GM12878 (cell line): ENCODE measurements at regions of chr22 and their contacts with region 1.

Region 1: DNA sequence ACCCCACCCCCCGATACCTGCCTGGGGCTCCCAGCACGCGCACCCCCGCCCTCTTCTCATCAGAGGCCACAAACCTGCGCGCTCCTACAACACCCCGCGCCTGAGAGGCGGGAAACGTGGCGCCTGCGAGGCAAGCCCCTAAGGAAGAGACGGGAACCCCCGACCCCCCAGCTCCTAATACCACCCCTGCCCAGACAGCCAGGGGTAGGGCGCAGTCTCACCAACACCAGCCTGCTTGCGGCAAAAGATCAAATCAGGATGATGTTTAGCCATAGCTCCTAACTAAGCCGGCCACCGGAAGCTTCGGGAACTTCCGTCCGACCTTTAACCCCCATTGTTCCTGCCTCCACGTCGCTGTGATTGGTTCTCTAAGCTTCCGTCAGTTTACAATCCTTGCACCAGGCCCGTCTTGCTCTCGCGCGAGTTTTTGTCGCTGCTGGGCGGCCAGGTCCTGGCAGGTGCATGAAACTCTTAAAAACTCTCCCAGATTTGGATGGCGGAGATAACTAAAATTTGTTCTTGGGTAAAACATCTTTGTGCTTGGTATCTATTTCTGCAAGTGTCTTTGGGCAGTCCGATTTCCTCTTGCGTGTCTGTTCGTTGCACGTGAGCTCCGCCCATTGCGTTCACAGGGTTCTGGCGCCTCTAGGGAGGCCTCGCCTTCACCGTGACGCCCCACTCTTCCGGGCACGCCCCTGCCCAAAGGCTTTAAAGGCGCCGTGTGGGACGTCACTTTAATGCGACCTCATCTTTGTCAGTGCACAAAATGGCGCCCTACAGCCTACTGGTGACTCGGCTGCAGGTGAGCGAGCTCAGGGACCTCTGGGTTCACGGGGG is at the starts of genes ACO2 and PHF5A:
- DNase-seq: peak; percentile 98
- ATAC-seq: peak; percentile 95
- H3K4me3 ChIP-seq: peak within 1 kb of the TSS; percentile 80
- H3K27ac ChIP-seq: peak within 1 kb of the TSS; percentile 97
- H3K4me1 ChIP-seq: peaks cover 14% of the 10 kb centered on the region
- H3K27me3 ChIP-seq: no peaks in the 10 kb centered on the region
- CTCF ChIP-seq: no peak
- EP300 ChIP-seq: peak in 1 of 2 experiments; percentile 32; a peak in 1 of 4 replicates
- POLR2A ChIP-seq: peak; percentile 81
- RAD21 ChIP-seq: no peak
- polyA plus RNA-seq, gene ACO2: 21.4 to 22.3 TPM
- polyA plus RNA-seq, gene PHF5A: 40.5 to 77.0 TPM

Region 2: GRCh38 chr22:41425660-41426365 is 42.8 kb before region 1 on chr22:
- CTCF ChIA-PET with region 1: no interaction called
- POLR2A ChIA-PET with region 1: no interaction called
- RAD21 ChIA-PET with region 1: no interaction called
- SMC1A ChIA-PET with region 1: no interaction called
- in situ Hi-C with region 1: no loop called
- intact Hi-C with region 1: no loop called
- DNase-seq: no peak
- ATAC-seq: peak; percentile 91
- H3K4me3 ChIP-seq: no peak overlapping the region
- H3K27ac ChIP-seq: no peak overlapping the region
- H3K4me1 ChIP-seq: peaks cover 7% of the 10 kb centered on the region
- H3K27me3 ChIP-seq: no peaks in the 10 kb centered on the region
- CTCF ChIP-seq: no peak
- EP300 ChIP-seq: no peak
- POLR2A ChIP-seq: no peak
- RAD21 ChIP-seq: no peak

Region 3: GRCh38 chr22:41479671-41480396 is 11.2 kb after region 1 on chr22:
- CTCF ChIA-PET with region 1: interaction called, 26 read pairs
- POLR2A ChIA-PET with region 1: interaction called, 27 read pairs
- RAD21 ChIA-PET with region 1: interaction called, 30 read pairs
- SMC1A ChIA-PET with region 1: interaction called, 59 read pairs
- in situ Hi-C with region 1: no loop called
- intact Hi-C with region 1: no loop called
- DNase-seq: no peak
- ATAC-seq: no peak; the same call in 2 of the 3 replicates
- H3K4me3 ChIP-seq: no peak overlapping the region
- H3K27ac ChIP-seq: peak overlapping the region; percentile 52
- H3K4me1 ChIP-seq: peaks cover 60% of the 10 kb centered on the region
- H3K27me3 ChIP-seq: no peaks in the 10 kb centered on the region
- CTCF ChIP-seq: no peak
- EP300 ChIP-seq: no peak
- POLR2A ChIP-seq: no peak
- RAD21 ChIP-seq: no peak